HEK293 (cell line): ENCODE measurements at regions of chr1 and their contacts with region 1.

Region 1: DNA sequence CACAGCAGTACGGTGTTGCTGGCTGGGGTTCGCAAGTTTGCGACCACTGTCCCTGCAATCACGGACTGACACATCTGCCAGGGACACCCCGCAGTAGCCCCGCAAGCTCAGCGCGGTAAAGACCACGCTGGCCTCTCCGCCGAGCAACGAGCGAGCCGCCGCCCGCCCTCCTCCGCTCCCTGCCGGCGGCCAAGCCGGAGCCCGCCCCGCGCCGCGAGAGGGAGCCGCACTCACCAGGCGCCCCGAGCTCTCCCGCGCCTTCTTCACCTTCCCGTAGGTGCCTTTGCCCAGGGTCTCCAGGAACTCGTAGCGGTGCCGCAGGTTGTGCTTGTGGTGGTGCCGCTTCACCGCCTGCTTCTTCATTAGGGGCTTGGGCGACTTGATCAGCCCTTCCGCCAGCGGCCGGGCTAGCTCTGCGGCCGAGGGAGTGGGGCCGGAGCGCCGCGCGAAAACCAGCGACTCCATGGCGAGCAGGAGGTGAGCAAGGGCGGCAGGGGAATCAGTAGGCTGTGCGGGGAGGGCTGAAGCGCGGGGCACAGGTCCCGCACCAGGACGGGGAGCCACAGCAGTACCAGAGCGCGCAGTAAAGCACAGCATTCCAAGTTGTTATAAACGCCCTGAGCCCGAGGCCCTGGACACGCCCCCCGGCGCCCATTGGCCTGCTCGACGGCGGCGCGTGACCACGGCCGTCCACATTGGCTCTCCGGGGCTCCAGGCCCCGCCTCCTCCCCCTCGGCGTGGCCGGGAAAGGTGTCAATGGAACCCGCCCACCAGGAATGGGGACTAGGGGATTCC is at the start of gene NUAK2:
- H3K4me3 ChIP-seq: peak within 1 kb of the TSS; percentile 74
- H3K27ac ChIP-seq: peak within 1 kb of the TSS; percentile 18; the same call in 1 of the 2 replicates
- H3K4me1 ChIP-seq: peaks cover 10% of the 10 kb centered on the region
- CTCF ChIP-seq: peak; percentile 85

Region 2: DNA sequence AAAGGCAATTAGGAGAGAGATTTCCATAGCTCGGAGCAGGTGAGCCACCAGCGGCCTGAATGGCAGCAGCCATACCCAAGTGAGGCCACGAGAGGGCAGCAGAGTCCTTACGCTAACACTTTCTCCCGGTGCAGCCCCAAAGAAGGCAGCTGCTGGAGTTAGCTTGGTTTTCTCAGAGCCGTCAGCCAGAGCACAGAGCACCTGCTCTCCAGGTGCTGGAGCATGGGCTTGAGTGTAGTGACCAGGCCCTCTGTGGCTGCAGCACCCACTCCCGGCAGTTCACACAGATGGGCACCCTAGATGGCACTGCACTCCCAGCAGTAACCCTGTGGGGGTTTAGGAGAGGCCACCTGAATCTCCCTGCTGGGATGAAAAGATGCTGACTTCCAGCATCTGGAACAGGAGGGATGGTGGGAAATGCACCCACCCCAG is 47.8 kb before region 1 on chr1:
- CTCF ChIA-PET with region 1: interaction called, 669 read pairs
- POLR2A ChIA-PET with region 1: interaction called, 30 read pairs
- H3K4me3 ChIP-seq: no peak overlapping the region
- H3K27ac ChIP-seq: no peak overlapping the region
- H3K4me1 ChIP-seq: no peaks in the 10 kb centered on the region
- CTCF ChIP-seq: peak; percentile 93

Region 3: DNA sequence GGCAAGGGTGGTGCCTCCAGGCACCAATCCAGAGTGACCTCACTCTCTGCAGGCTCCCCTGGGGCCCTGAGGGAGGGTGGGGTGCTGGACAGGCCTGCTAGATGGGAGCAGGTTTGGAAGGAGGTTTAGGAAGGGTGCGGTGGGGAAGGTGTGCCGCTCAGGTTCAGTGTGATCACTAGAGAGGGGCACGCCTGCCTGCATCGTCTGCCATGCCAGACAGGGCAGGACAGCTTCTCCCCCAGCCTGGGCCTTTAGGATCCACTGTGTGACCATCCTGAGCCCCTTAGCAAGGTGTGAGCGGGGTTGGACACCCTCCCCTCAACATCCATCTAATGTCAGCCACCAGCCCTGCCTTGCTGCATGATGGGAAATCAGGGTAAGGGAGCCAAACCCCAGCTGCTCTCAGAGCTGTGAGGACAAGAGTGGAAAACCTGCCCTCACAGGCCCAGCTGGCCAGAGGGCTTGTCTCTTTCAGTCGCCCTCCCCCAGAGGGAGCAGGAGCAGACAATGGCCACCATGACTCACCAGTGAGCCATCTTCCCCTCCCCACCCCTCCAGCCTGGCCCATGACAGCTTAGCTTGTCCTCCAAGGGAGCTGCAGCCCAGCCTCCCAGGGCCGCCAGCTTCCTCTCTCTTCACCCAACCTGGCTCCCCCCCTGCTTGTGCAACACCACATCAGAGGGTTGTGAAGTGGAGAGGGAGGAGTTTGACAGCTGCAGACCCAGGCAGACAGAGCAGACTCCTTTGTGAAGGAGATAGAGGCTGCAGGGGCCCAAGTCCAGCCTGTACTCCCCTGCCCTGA is 36.8 kb before region 1 on chr1:
- CTCF ChIA-PET with region 1: interaction called, 669 read pairs
- POLR2A ChIA-PET with region 1: interaction called, 12 read pairs
- H3K4me3 ChIP-seq: no peak overlapping the region
- H3K27ac ChIP-seq: no peak overlapping the region
- H3K4me1 ChIP-seq: no peaks in the 10 kb centered on the region
- CTCF ChIP-seq: no peak; the same call in 1 of the 2 replicates

Region 4: GRCh38 chr1:205294175-205294913 is 27.0 kb before region 1 on chr1:
- CTCF ChIA-PET with region 1: interaction called, 18 read pairs
- POLR2A ChIA-PET with region 1: interaction called, 12 read pairs
- H3K4me3 ChIP-seq: no peak overlapping the region
- H3K27ac ChIP-seq: peak overlapping the region; percentile 7; the same call in 1 of the 2 replicates
- H3K4me1 ChIP-seq: peaks cover 5% of the 10 kb centered on the region
- CTCF ChIP-seq: no peak

Region 5: GRCh38 chr1:205300886-205301821 is 20.2 kb before region 1 on chr1:
- CTCF ChIA-PET with region 1: interaction called, 18 read pairs
- POLR2A ChIA-PET with region 1: interaction called, 9 read pairs
- H3K4me3 ChIP-seq: peak overlapping the region; percentile 21
- H3K27ac ChIP-seq: peak overlapping the region; percentile 22; the same call in 1 of the 2 replicates
- H3K4me1 ChIP-seq: peaks cover 7% of the 10 kb centered on the region
- CTCF ChIP-seq: no peak

Region 6: GRCh38 chr1:205335643-205336091 is 14.3 kb after region 1 on chr1:
- CTCF ChIA-PET with region 1: interaction called, 31 read pairs
- POLR2A ChIA-PET with region 1: no interaction called
- H3K4me3 ChIP-seq: no peak overlapping the region
- H3K27ac ChIP-seq: no peak overlapping the region
- H3K4me1 ChIP-seq: 0 out of 2 replicates have a peak, but pooled peaks cover 2% of the 10 kb centered on the region
- CTCF ChIP-seq: peak; percentile 97